ENCODE measurements at regions of chr12 and their contacts with region 1.

Region 1: DNA sequence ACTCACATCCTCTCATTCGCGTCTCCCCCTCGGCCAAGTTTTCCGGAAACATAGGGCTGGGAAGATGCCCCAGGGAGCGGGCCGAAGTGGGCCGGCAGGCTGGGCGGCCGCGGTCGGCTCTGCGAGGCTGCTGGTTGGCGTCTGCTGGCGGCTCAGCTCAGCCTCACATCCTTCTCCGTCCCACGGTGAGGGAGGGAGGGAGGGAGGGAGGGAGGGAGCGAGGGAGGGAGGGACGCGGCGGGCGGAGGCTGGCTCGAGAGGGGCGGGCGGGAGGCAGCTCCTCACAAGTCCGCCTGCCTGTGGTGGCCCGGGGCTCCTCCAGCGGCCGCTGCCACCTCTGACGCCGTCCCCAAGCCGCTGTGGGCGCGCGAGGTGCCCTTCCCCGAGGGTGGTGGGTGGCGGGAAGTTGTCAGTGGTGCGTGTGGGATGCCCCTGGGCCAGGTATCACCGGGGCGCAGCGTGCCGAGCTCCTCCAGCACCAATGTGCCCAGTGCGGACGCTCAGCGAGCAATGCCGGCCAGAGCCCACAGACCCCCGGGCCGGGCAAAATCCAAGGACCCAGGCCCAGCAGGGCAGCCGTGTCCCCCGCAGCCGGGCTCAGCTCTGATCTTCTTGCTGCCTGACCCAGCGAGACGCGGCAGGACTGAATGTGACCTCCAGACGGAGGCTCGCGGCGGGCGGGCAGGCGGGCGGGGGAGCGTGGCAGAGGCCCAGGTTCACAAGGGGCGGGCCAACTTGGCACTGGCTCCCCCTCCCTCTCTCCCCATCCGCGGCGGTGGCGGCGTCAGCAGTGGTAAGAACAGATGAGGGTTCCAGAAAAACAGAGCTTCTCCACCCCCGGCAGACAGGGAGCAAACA is 94.0 kb downstream of the RFLNA start:
- DNase-seq: peak; percentile 92 to 96
- ATAC-seq: peak; percentile 52 to 65 (median 55)
- H3K4me3 ChIP-seq: peak overlapping the region; percentile 79
- H3K27ac ChIP-seq: peak overlapping the region; percentile 96
- H3K4me1 ChIP-seq: peaks cover 75% of the 10 kb centered on the region
- H3K27me3 ChIP-seq: no peaks in the 10 kb centered on the region
- CTCF ChIP-seq: no peak

Region 2: GRCh38 chr12:124369055-124369900 is 19.6 kb before region 1 on chr12:
- intact Hi-C with region 1: loop called in 1 of 2 experiments (anchors 2 kb)
- DNase-seq: peak; percentile 94 to 99
- ATAC-seq: peak; percentile 85 to 87 (median 86)
- H3K4me3 ChIP-seq: peak overlapping the region; percentile 35
- H3K27ac ChIP-seq: peak overlapping the region; percentile 95
- H3K4me1 ChIP-seq: peaks cover 71% of the 10 kb centered on the region
- H3K27me3 ChIP-seq: no peaks in the 10 kb centered on the region
- CTCF ChIP-seq: peak; percentile 56

Region 3: DNA sequence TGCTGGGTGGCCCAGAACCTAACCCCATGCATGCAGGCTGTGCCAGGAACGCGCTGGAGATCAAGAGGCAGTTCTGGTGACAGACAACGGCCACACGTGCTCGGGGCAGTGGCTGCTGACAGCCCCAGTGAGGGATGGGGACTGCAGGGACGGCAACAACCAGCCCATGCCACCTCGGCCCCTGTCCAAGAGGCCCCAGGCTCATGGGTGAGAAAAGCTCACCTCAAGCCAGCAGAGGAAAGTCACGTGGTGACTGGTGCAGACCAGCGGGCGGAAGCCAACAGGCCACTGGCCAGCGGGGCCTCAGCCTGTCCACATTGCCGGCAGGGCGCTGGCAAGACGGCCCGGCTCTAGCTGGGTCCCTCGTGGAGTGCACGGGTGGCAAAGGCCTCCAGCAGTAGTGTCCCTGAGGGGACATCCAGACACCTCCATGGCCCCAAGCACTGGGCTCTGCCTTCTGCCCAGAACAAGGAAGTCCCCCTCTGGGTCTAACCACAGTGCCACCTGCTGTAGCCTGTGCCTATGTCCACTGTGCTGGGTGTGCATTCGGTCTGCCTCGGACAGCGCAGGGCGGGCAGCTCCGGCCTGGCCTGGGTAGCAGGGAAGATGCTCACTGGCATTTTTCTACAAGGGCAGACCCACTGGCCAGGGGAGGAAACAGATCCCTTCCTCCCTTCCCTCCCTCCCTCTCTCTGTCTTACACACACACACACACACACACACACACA is 44.4 kb after region 1 on chr12:
- intact Hi-C with region 1: loop called in 1 of 2 experiments (anchors 5 kb)
- DNase-seq: peak; percentile 85 to 95
- ATAC-seq: peak; percentile 85 to 92 (median 88)
- H3K4me3 ChIP-seq: no peak overlapping the region
- H3K27ac ChIP-seq: peak overlapping the region; percentile 58
- H3K4me1 ChIP-seq: peaks cover 10% of the 10 kb centered on the region
- H3K27me3 ChIP-seq: no peaks in the 10 kb centered on the region
- CTCF ChIP-seq: peak; percentile 18

Region 4: DNA sequence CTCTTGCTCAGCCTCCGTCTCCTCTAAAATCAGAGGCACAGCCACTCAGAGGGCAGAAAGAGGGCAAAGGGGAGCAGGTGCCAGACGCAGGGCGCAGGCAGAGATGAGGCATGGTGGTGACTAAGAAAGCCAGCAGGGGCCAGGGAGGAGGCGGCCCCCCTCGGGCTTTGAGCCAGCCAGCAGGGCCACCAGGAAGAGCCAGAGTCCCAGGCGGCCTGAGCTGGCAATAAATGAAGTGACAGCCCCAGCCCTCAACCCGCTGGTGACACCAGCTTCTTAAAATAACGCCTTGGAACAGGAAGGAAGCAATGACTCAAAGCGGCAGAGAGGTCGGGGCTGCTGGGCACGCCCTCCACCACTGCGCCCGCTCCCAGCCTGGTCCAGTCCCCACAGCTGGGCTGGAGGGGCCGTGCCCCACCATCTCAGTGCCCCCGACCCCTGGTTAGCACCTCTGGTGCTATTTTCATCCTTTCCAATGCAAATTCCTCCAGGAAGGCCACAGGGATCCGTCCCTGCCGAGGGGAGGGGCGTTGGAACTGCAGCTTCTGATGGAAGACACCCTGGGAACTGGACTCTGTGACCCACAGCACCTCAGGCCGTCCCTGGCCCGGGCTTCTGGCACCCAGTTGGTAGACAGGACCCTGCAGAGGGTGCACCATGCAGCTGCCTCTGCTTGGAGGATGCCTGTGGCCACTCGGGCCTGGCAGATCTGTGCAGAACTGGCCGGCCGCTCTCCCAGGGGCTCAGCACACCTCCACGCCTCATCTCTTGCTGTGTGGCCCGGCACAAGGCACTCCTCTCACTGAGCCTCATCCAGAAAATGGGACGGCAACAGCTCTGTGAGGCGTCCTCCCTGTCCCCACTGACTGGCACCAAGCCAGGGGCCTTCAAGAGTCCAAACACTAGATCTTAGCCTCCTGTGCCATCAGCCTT is 64.8 kb after region 1 on chr12:
- intact Hi-C with region 1: loop called (anchors 5 kb)
- DNase-seq: peak; percentile 93 to 97
- ATAC-seq: peak; percentile 82 to 86 (median 82)
- H3K4me3 ChIP-seq: peak overlapping the region; percentile 40
- H3K27ac ChIP-seq: peak overlapping the region; percentile 87
- H3K4me1 ChIP-seq: peaks cover 52% of the 10 kb centered on the region
- H3K27me3 ChIP-seq: no peaks in the 10 kb centered on the region
- CTCF ChIP-seq: no peak

Measured in psoas muscle (tissue), 8 donors.